ENCODE measurements at regions of chr6 and their contacts with region 1.

Region 1: DNA sequence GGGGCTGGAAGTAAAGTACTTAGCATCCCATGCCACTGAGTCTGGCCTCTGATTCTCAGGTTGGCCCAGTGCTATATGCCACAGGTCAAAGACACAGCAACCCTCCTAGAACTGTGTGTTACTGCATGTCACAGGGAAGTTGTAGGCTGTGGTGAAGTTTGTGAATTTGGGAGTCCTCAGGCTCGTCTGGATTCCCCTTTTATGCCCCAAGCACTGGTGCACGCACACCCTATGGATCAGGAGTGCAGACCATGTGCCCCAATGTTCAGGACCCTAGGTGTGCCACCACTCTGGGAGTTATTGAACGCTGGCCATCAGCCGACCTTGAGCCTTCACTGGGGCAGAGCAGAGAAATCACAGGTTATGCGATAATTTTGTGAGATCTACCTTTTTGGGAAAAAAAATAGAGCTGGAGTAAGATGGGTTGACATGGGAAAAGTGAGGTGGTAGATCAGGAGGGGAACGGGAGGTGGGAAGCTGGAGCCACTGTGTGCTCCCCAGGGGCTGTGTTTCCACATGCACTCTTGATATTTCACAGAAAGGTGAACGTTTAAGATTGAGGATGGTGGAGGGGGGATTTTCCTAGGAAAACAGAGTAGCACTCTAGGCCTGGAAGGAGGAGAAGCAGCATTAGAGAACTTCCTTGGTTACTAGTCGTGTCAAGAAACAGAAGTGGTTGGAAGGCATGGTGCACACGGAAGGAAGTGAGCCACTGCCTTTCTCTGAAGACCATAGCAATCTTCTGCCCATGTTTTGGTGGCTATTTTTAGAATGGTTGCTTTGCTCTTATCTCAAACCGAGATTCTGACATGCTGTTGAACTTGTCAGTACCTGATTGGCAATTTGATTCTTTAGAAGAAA is 44.1 kb downstream of the DUSP22 start:
- DNase-seq: no peak
- ATAC-seq: peak; percentile 57
- H3K4me3 Mint-ChIP-seq: peak overlapping the region; percentile 62
- H3K27ac Mint-ChIP-seq: peak overlapping the region; percentile 78
- H3K4me1 Mint-ChIP-seq: peaks cover 75% of the 10 kb centered on the region
- H3K27me3 Mint-ChIP-seq: no peaks in the 10 kb centered on the region
- CTCF ChIP-seq: no peak

Region 2: DNA sequence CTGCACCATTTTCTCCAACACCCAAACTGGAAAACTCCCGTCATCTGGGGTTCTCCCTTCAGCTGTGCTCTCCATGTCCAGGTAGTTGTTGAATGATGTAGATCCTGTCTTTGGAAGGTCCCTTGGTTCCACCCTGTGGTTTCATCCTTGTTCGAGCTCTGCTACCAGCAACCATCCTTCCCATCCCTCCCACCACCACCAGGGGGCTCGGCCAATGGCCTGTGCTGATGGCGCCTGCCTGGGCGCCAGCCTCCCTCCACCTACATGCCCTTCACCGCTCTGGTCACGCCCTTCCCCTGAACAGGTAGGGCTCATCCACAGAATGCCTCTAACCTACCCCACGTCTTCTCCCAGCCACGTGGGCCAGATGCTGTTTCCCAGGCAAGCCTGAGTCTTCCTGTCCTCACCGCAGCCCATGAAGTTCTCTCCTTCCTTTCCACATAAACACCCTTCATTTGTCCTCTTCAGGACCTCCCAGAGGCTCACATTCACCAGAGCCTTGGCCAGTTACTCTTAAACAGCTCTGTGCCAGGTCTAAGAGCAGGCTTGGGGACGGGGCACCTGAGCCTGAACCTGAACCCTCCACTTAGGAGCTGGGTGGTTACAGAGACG is 119.2 kb before region 1 on chr6:
- CTCF ChIA-PET with region 1: interaction called, 4 read pairs
- POLR2A ChIA-PET with region 1: interaction called, 10 read pairs
- intact Hi-C with region 1: no loop called
- DNase-seq: no peak
- ATAC-seq: no peak
- H3K4me3 Mint-ChIP-seq: peak overlapping the region; percentile 61
- H3K27ac Mint-ChIP-seq: peak overlapping the region; percentile 90
- H3K4me1 Mint-ChIP-seq: peaks cover 81% of the 10 kb centered on the region
- H3K27me3 Mint-ChIP-seq: no peaks in the 10 kb centered on the region
- CTCF ChIP-seq: no peak

Region 3: DNA sequence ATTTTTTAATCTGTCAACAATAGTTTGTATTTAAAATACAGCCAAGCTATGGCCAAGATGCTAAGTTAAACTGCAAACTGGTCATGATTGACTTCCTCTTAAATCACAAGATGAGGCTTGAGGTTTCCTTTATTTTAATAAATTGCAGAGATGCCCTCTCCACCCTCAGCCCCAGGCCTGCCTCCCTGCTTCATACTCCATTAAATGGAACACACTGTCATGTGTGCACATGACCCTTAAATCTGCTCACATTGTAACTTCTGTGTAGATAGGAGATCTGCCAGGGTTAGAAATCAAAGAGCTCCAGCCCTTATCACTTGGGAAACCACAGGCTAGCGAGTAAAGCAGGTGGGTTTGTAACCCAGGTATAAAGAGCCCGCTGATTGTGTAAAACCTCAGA is 23.3 kb before region 1 on chr6:
- CTCF ChIA-PET with region 1: interaction called, 3 read pairs
- POLR2A ChIA-PET with region 1: interaction called, 11 read pairs
- intact Hi-C with region 1: loop called (anchors 2 kb)
- DNase-seq: peak; percentile 15
- ATAC-seq: peak; percentile 78
- H3K4me3 Mint-ChIP-seq: peak overlapping the region; percentile 53
- H3K27ac Mint-ChIP-seq: peak overlapping the region; percentile 90
- H3K4me1 Mint-ChIP-seq: peaks cover 95% of the 10 kb centered on the region
- H3K27me3 Mint-ChIP-seq: no peaks in the 10 kb centered on the region
- CTCF ChIP-seq: no peak

Region 4: GRCh38 chr6:319177-320131 is 16.9 kb before region 1 on chr6:
- CTCF ChIA-PET with region 1: interaction called, 3 read pairs
- POLR2A ChIA-PET with region 1: interaction called, 6 read pairs
- intact Hi-C with region 1: loop called (anchors 2 kb)
- DNase-seq: peak; percentile 7
- ATAC-seq: peak; percentile 58
- H3K4me3 Mint-ChIP-seq: peak overlapping the region; percentile 29
- H3K27ac Mint-ChIP-seq: peak overlapping the region; percentile 28
- H3K4me1 Mint-ChIP-seq: peaks cover 46% of the 10 kb centered on the region
- H3K27me3 Mint-ChIP-seq: no peaks in the 10 kb centered on the region
- CTCF ChIP-seq: no peak

Region 5: GRCh38 chr6:347232-347631 is 10.8 kb after region 1 on chr6:
- CTCF ChIA-PET with region 1: interaction called, 5 read pairs
- POLR2A ChIA-PET with region 1: interaction called, 16 read pairs
- intact Hi-C with region 1: loop called (anchors 1 kb)
- DNase-seq: no peak
- ATAC-seq: peak; percentile 92
- H3K4me3 Mint-ChIP-seq: peak overlapping the region; percentile 59
- H3K27ac Mint-ChIP-seq: peak overlapping the region; percentile 77
- H3K4me1 Mint-ChIP-seq: peaks cover 68% of the 10 kb centered on the region
- H3K27me3 Mint-ChIP-seq: no peaks in the 10 kb centered on the region
- CTCF ChIP-seq: no peak

Region 6: DNA sequence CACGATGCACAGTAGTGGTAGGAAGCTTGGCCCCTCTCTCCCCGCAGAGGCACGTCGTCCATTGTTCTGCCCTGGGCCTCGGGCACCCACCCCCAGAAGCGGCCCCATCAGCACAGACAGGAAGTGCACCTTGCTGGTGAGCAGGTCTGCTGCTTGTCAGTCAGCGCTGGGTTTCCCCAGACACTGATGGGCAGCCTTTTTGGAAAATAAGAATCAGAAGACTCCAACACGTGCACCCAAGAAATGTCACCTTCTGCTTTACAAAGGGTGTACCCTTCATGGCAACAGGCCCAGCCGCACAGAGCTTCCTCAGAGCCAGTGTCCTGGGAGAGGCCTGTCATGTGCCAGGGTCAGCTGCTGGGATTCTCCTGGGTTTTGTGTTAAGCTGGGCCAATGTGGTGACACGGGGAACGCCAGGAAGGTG is 20.5 kb after region 1 on chr6:
- CTCF ChIA-PET with region 1: interaction called, 3 read pairs
- POLR2A ChIA-PET with region 1: interaction called, 9 read pairs
- intact Hi-C with region 1: loop called (anchors 1 kb)
- DNase-seq: no peak
- ATAC-seq: peak; percentile 85
- H3K4me3 Mint-ChIP-seq: peak overlapping the region; percentile 68
- H3K27ac Mint-ChIP-seq: peak overlapping the region; percentile 93
- H3K4me1 Mint-ChIP-seq: peaks cover 73% of the 10 kb centered on the region
- H3K27me3 Mint-ChIP-seq: no peaks in the 10 kb centered on the region
- CTCF ChIP-seq: no peak

Region 7: GRCh38 chr6:379367-380181 is 43.2 kb after region 1 on chr6:
- CTCF ChIA-PET with region 1: no interaction called
- POLR2A ChIA-PET with region 1: interaction called, 4 read pairs
- intact Hi-C with region 1: loop called (anchors 2 kb)
- DNase-seq: no peak
- ATAC-seq: peak; percentile 38
- H3K4me3 Mint-ChIP-seq: peak overlapping the region; percentile 12
- H3K27ac Mint-ChIP-seq: peak overlapping the region; percentile 33
- H3K4me1 Mint-ChIP-seq: peaks cover 58% of the 10 kb centered on the region
- H3K27me3 Mint-ChIP-seq: no peaks in the 10 kb centered on the region
- CTCF ChIP-seq: no peak

Measured in activated B cell treated with CpG ODN at 0.5 μM for 24 hours (primary cell).